ENCODE measurements at regions of chr19 and their contacts with region 1.

Region 1: DNA sequence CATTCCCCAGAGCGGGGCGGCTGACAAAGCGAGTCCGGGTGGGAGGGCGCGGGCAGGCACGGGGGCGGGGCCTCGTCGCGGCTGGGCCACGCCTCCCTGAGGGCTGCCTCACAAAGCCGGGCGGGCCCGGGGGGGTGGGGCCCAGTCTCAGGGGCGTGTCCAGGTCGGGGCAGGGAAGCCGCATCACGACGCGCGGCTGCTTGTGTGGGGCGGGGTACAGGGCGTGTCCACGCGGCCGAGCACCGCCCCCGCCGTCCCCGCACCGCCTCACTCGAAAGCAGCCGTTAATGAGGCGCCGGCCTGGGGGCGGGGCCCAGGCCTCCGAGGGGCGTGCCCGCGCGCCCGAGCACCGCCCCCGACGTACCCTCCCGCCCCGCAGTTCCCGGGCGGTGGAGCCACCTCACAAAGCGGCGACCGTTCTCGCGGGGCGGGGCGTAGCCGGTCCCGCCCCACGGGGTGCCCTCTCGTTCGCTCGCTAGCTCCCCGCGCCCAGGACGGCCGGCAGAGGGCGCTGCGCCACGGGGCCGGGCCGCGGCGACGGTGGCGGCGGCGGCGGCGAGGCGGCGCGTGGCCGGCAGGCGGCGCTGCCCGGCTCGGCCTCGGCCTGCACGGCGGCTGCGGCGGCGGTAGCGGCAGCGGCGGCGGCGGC is at the start of gene CARM1:
- DNase-seq: peak; percentile 98 to 100
- H3K4me3 ChIP-seq: peak within 1 kb of the TSS; percentile 88 to 96
- H3K27ac ChIP-seq: peak within 1 kb of the TSS; percentile 55 to 86
- H3K4me1 ChIP-seq: peaks cover 3 to 10% of the 10 kb centered on the region in 2 donors
- H3K27me3 ChIP-seq: no peaks in the 10 kb centered on the region
- CTCF ChIP-seq: peak; percentile 33 to 94 (median 54)
- total RNA-seq, gene CARM1: 22.9 TPM

Region 2: GRCh38 chr19:10653715-10654492 is 217.2 kb before region 1 on chr19 and contains the start of gene ILF3:
- intact Hi-C with region 1: loop called (anchors 2 kb)
- DNase-seq: peak; percentile 99 to 100
- H3K4me3 ChIP-seq: peak within 1 kb of the TSS; percentile 94 to 97
- H3K27ac ChIP-seq: peak within 1 kb of the TSS; percentile 97 to 100
- H3K4me1 ChIP-seq: peaks cover 0 to 23% of the 10 kb centered on the region in 2 donors
- H3K27me3 ChIP-seq: no peaks in the 10 kb centered on the region
- CTCF ChIP-seq: no peak
- total RNA-seq, gene ILF3: 168 TPM

Region 3: GRCh38 chr19:10695401-10696398 is 175.4 kb before region 1 on chr19:
- intact Hi-C with region 1: no loop called
- DNase-seq: peak; percentile 74 to 91
- H3K4me3 ChIP-seq: peak overlapping the region in 1 of 2 donors; percentile 19
- H3K27ac ChIP-seq: no peak overlapping the region
- H3K4me1 ChIP-seq: no peaks in the 10 kb centered on the region
- H3K27me3 ChIP-seq: no peaks in the 10 kb centered on the region
- CTCF ChIP-seq: no peak

Region 4: GRCh38 chr19:10835754-10836477 is 35.2 kb before region 1 on chr19 and contains the start of gene TMED1:
- intact Hi-C with region 1: loop called (anchors 1 kb)
- DNase-seq: peak; percentile 91 to 98
- H3K4me3 ChIP-seq: peak within 1 kb of the TSS; percentile 71 to 86
- H3K27ac ChIP-seq: peak within 1 kb of the TSS; percentile 96 to 99
- H3K4me1 ChIP-seq: peaks cover 0 to 7% of the 10 kb centered on the region in 2 donors
- H3K27me3 ChIP-seq: no peaks in the 10 kb centered on the region
- CTCF ChIP-seq: peak in 2 of 3 experiments; percentile 41 to 46
- total RNA-seq, gene TMED1: 25.0 TPM

Region 5: GRCh38 chr19:10928525-10929401 is 57.7 kb after region 1 on chr19 and contains the starts of genes TIMM29 and YIPF2:
- intact Hi-C with region 1: loop called (anchors 1 kb)
- DNase-seq: peak; percentile 93 to 98
- H3K4me3 ChIP-seq: peak within 1 kb of the TSS; percentile 70 to 95
- H3K27ac ChIP-seq: peak within 1 kb of the TSS; percentile 83 to 90
- H3K4me1 ChIP-seq: peaks cover 11 to 20% of the 10 kb centered on the region in 2 donors
- H3K27me3 ChIP-seq: no peaks in the 10 kb centered on the region
- CTCF ChIP-seq: no peak
- total RNA-seq, gene TIMM29: 66.9 TPM
- total RNA-seq, gene YIPF2: 139 TPM

Region 6: GRCh38 chr19:10960314-10961072 is 89.4 kb after region 1 on chr19 and contains the start of gene SMARCA4:
- intact Hi-C with region 1: loop called (anchors 1 kb)
- DNase-seq: peak; percentile 75 to 98
- H3K4me3 ChIP-seq: peak within 1 kb of the TSS; percentile 79 to 100
- H3K27ac ChIP-seq: peak within 1 kb of the TSS; percentile 87 to 92
- H3K4me1 ChIP-seq: peaks cover 3 to 10% of the 10 kb centered on the region in 2 donors
- H3K27me3 ChIP-seq: no peaks in the 10 kb centered on the region
- CTCF ChIP-seq: no peak
- total RNA-seq, gene SMARCA4: 89.5 TPM

Region 7: DNA sequence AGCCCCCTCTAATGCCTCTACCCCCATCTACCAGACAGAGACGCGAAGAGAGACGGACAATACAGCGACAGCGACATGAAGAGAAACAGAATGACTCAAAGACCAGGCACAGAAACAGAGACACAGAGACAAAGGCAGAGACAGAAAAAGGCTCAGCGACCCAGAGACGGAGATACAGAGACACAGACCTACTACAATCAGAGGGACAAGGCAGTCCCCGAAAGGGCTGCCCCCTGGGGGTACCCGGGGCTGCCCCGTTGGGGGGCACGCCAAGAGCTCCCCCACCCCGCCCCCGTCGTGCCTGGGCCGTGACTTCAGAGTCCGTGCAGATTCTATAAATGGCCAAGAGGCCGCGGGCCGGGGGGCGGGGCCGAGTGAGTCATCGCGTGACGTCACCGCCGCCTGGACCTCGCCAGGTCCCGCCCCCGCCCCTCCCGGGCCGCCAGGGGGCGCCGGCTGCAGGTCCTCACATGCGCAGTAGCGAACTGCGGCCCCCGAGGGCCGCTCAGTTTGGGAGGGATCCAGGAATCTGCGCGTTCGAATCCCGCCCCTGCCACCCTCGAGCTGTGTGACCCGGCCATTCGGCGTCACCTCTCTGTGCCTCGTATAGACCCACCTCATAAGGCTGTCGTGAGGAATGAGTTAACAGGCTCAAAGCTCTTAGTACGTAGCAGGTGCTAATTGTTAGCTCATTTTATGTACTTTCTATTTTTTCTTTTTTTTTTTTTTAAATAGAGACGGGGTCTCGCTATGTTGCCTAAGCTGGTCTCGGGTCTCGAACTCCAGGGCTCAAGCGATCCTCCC is 664.9 kb after region 1 on chr19:
- intact Hi-C with region 1: loop called (anchors 5 kb)
- DNase-seq: peak; percentile 78 to 96
- H3K4me3 ChIP-seq: peak overlapping the region; percentile 37 to 55
- H3K27ac ChIP-seq: peak overlapping the region; percentile 95 to 97
- H3K4me1 ChIP-seq: peaks cover 7 to 20% of the 10 kb centered on the region in 2 donors
- H3K27me3 ChIP-seq: no peaks in the 10 kb centered on the region
- CTCF ChIP-seq: peak; percentile 91 to 98 (median 93)

Measured in ascending aorta (tissue), 2 donors.